ENCODE measurements at regions of chr11 and their contacts with region 1.

Region 1: DNA sequence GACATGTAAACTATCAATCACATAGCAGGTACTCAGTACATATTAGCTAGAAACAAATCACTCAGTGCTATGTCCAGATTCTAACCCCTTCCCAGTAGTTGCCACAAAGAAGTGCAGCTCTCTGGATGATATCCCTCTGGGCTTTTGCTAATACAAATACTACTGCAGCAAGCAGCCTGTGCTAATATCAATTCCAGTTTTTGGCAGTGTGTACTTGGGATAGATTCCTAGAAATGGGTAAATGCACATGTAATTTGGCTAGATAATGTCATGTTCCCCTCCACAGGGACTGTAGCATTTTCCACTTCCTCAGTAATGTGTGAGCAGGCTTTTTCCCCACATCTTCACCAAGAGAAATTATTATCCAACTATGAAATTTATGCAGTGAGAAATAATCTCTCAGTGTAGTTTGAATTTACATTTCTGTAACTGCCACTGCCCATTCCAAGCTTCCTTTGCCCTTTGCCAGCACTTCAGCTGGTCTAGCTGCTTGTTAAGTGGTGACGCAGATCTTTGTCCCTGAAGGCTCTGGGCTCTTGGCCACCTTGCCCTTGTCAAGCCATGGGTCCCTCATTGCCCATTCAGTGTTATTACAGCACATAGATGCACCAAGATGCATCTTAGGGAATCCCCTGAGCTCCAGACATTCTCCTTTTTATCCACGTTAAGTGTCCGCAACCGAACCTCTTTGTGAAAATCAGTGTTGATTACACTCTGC is 107.1 kb upstream of the CLPB start:
- DNase-seq: no peak
- H3K4me3 ChIP-seq: no peak overlapping the region
- CTCF ChIP-seq: no peak

Region 2: DNA sequence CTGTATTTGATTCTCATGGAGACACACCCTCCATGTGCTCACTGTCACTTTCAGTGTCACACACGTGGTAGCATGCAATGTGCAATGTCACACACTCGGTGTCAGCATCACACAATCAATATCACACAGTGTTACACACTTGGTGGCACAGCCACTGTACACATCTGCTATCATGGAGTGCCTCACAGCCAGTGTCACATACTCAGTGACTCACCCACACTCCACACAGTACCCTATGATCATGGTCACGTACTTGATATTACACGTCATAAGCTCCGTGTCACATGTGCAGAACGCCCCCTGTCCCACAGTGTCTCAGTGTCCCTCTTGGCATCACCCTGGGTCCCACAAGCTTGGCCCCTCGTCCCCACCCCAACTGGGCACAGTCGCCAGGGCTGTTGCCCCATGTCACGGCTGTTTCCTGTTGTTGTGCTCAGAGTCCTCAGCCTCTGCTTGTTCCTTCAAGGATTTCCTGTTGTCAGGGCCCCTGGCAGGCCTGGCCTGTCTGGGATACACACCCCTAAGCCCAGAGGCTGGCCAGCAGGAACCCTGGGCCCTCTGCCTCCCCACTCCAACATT is 83.3 kb after region 1 on chr11:
- in situ Hi-C with region 1: loop called (anchors 5 kb)
- DNase-seq: no peak
- H3K4me3 ChIP-seq: no peak overlapping the region
- CTCF ChIP-seq: no peak

Region 3: DNA sequence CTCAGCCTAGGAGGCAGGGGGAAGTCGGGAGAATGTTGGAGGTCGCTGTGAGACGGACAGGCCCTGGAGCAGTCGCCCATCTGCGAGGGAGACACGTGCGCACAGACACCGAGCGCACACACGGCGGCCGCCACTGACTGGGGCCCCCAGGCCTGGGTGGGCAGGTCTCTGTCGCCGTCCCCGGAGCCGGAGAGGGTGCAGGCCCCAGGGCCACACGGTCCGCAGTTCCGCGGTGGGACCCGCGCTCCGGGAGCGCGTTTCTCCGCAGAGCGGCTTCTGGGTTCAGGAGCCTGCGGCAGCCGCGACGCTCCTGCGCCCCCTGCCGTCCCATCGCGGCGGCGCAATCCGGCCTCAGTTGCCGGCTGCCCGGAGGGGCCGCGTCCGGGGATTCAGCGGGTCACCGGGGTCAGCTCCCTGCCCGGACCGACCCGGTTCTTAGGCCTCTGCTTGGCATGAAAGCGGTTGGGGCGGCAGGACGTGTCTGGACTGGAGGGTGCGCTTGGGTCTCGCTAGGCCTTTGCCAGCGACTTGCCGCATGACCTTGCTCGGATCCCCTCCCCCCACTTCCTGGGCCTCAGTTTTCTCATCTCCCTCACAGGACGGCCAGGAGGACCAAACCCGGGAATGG is 101.6 kb after region 1 on chr11:
- in situ Hi-C with region 1: no loop called
- DNase-seq: no peak
- H3K4me3 ChIP-seq: peak overlapping the region; percentile 36
- CTCF ChIP-seq: peak; percentile 81

Region 4: DNA sequence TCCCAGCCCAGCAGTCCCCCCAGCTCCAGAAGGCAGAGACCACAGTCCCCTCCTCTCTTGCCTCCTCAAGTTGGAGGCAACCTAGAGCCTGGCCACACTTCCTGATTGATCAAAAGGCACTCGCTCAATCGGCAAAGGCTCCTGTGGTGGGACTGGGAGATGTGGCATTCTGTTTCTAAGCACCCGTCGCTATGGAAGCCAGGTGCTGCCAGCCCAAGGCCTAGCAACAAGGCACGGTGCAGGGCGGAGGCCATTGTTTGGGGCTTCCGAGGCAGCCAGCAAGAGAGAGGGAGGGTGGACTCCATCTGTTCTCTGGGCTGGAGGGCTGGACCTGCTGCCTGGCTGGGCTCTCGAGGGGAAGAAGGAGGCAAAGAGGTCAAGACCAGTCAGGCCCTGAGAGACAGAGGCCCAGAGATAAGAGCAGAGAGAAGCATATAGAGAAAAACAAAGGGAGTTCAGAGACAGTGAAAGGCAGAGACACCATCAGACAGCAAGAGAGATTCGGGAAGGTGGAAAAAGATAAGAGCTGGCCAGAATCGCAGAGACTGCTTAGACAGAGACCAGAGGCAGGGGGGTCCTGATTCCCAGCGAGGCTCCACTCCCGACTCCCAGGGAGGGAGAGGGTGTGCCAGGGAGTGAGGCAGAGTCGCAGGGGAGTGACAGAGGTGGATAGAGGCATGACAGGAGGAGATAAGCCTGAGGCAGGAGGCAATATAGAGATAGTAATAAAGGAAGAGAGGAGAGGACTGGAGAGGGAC is 111.6 kb after region 1 on chr11:
- in situ Hi-C with region 1: loop called (anchors 10 kb)
- DNase-seq: no peak
- H3K4me3 ChIP-seq: no peak overlapping the region
- CTCF ChIP-seq: no peak